ENCODE measurements at regions of chr1 and their contacts with region 1.

Region 1: GRCh38 chr1:111045033-111045722 is 81.5 kb upstream of the LRIF1 start:
- DNase-seq: no peak
- ATAC-seq: no peak
- H3K4me3 ChIP-seq: no peak overlapping the region
- H3K27ac ChIP-seq: no peak overlapping the region
- H3K4me1 ChIP-seq: no peaks in the 10 kb centered on the region
- H3K27me3 ChIP-seq: no peaks in the 10 kb centered on the region
- CTCF ChIP-seq: no peak
- POLR2A ChIP-seq: no peak
- RAD21 ChIP-seq: no peak

Region 2: GRCh38 chr1:111161843-111162487 is 116.8 kb after region 1 on chr1:
- CTCF ChIA-PET with region 1: no interaction called
- POLR2A ChIA-PET with region 1: no interaction called
- dilution Hi-C with region 1: no loop called
- in situ Hi-C with region 1: no loop called
- intact Hi-C with region 1: loop called (anchors 5 kb)
- DNase-seq: peak; percentile 19
- ATAC-seq: peak; percentile 35
- H3K4me3 ChIP-seq: no peak overlapping the region
- H3K27ac ChIP-seq: no peak overlapping the region
- H3K4me1 ChIP-seq: no peaks in the 10 kb centered on the region
- H3K27me3 ChIP-seq: no peaks in the 10 kb centered on the region
- CTCF ChIP-seq: no peak
- POLR2A ChIP-seq: no peak
- RAD21 ChIP-seq: no peak

Region 3: GRCh38 chr1:111275079-111275478 is 229.9 kb after region 1 on chr1:
- CTCF ChIA-PET with region 1: no interaction called
- POLR2A ChIA-PET with region 1: no interaction called
- dilution Hi-C with region 1: no loop called
- in situ Hi-C with region 1: no loop called
- intact Hi-C with region 1: no loop called
- DNase-seq: peak; percentile 31
- ATAC-seq: no peak
- H3K4me3 ChIP-seq: no peak overlapping the region
- H3K27ac ChIP-seq: no peak overlapping the region
- H3K4me1 ChIP-seq: no peaks in the 10 kb centered on the region
- H3K27me3 ChIP-seq: peaks cover 18% of the 10 kb centered on the region
- CTCF ChIP-seq: no peak
- POLR2A ChIP-seq: no peak
- RAD21 ChIP-seq: no peak